Heart left ventricle (tissue), 16 donors: ENCODE measurements at regions of chr1 and their contacts with region 1.

Region 1: DNA sequence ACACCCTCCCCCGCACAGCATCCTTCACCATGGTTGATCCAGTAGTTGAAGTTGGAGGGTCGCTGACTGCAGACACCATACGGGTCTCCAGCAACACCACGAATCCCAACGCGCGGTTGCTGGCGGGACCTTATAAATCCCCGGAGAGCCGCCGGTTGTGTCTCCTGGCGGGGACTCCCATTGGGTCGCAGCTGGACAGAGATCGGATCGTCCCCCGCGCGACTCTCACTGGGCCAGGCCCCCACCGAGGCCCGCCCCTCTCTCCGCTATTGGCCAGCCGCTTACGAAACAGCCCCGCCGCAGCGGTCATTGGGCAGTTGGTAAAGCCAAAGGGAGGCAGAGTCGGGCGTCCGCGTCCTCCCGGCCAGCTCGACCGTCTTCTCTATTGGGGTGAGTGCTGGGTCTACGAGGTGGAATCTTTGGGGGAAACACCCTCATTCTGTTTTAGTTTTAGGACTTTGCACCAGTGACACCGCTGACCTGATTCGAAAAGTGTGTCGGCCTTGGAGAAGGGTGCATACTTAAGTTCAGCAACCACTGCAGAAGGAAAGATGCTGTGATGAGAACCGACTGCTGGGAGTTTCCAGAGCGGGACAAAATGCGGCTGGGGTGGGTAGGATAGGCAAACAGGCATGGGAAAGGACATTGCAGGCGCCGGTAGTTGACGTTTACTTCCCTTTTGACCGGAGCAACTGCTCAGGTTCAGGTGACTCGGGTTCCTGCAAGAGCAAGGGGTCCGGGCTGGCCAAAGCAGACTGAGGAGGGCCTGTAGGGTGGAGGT is 27.3 kb downstream of the RABIF start:
- DNase-seq: peak; percentile 92 to 96 (median 95)
- ATAC-seq: peak; percentile 98 to 99 (median 98)
- H3K4me3 ChIP-seq: peak overlapping the region; percentile 53 to 90 (median 78)
- H3K27ac ChIP-seq: peak overlapping the region in 3 of 12 donors; percentile 31 to 61 (median 45)
- H3K4me1 ChIP-seq: peaks cover 0 to 21% (median 10%) of the 10 kb centered on the region in 12 donors
- H3K27me3 ChIP-seq: peaks cover 0 to 6% (median 0%) of the 10 kb centered on the region in 9 donors
- CTCF ChIP-seq: no peak
- POLR2A ChIP-seq: peak; percentile 19 to 66

Region 2: DNA sequence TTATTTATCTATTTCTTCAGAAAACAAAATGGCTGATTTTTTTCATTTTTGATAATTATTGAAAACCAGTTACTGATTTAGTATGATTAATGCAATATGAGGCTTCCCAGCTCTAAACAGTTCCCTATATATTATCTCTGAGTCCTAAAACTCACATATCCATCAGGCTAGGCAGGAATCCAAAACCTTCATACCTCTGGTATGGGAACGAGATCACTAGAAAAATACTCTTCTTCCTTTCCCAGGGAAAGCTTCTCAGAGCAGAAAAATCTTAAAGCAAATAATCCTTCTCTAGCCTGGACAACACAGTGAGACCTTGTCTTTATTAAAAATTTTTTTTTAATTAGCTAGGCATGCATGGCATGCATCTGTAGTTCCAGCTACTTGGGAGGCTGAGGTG is 95.9 kb before region 1 on chr1:
- intact Hi-C with region 1: loop called in 1 of 10 experiments (anchors 10 kb)
- DNase-seq: no peak
- ATAC-seq: no peak
- H3K4me3 ChIP-seq: no peak overlapping the region
- H3K27ac ChIP-seq: no peak overlapping the region
- H3K4me1 ChIP-seq: no peaks in the 10 kb centered on the region
- H3K27me3 ChIP-seq: no peaks in the 10 kb centered on the region
- CTCF ChIP-seq: no peak
- POLR2A ChIP-seq: no peak

Region 3: DNA sequence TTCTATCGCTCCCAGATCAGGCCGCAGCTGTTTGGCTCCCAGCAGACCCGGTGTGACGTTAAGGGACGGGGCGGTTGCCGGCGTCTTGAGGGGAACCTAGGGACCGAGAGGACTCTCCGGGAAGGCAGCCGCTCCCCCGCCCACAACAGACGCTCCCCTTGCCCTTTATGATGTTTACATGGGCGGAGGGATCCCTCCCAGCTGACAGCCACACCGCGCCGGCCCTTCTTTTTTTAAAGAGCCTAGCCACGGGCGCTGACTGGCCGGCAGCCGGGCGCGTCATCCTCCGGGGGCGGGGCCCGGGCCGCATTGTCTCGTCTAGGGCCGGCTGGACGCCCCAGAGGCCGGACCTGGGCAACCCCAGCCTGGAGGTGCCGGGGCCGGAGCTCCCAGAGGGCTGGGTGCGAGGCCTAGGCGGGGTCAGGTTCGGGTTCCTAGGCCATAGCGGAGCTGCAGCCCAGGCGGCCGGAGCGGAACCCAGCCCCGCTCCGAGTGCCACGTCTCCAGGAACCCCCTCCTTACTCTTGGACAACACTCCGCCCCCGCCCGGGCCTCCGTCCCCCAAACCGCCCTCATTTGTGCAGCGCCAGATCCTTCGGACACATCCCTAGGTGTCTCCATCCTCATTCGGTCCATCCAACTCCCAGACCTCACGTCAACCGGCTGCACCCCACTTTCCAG is 50.9 kb before region 1 on chr1 and contains the start of gene PCAT6:
- intact Hi-C with region 1: loop called in 3 of 10 experiments (anchors 5 kb)
- DNase-seq: peak; percentile 95 to 97 (median 96)
- ATAC-seq: peak; percentile 91 to 96 (median 94)
- H3K4me3 ChIP-seq: peak within 1 kb of the TSS; percentile 51 to 89 (median 75)
- H3K27ac ChIP-seq: peak within 1 kb of the TSS; percentile 43 to 91 (median 82)
- H3K4me1 ChIP-seq: peaks cover 0 to 39% (median 18%) of the 10 kb centered on the region in 12 donors
- H3K27me3 ChIP-seq: no peaks in the 10 kb centered on the region
- CTCF ChIP-seq: no peak
- POLR2A ChIP-seq: peak in 1 of 2 donors; percentile 88
- total RNA-seq, gene PCAT6: 0.39 to 2.5 (median 1.0) TPM in 8 of 9 donors, not detected in the other

Region 4: GRCh38 chr1:202968840-202969295 is 107.3 kb after region 1 on chr1:
- intact Hi-C with region 1: no loop called
- DNase-seq: peak in 4 of 5 donors; percentile 37 to 66 (median 55)
- ATAC-seq: peak in 3 of 4 donors; percentile 32 to 58 (median 36)
- H3K4me3 ChIP-seq: peak overlapping the region in 1 of 12 donors; percentile 71
- H3K27ac ChIP-seq: peak overlapping the region in 6 of 12 donors; percentile 26 to 99 (median 92)
- H3K4me1 ChIP-seq: peaks cover 0 to 41% (median 29%) of the 10 kb centered on the region in 12 donors
- H3K27me3 ChIP-seq: no peaks in the 10 kb centered on the region
- CTCF ChIP-seq: peak; percentile 27 to 76 (median 52)
- POLR2A ChIP-seq: no peak